OCI-LY7 (cell line): ENCODE measurements at regions of chr2 and their contacts with region 1.

Region 1: GRCh38 chr2:201231781-201232466 is 28.4 kb upstream of the CASP8 start:
- DNase-seq: peak; percentile 96
- H3K4me3 ChIP-seq: peak overlapping the region; percentile 27
- H3K27ac ChIP-seq: peak overlapping the region; percentile 19
- H3K4me1 ChIP-seq: peaks cover 39% of the 10 kb centered on the region
- CTCF ChIP-seq: peak; percentile 97

Region 2: GRCh38 chr2:200713003-200713703 is 518.8 kb before region 1 on chr2:
- CTCF ChIA-PET with region 1: no interaction called
- POLR2A ChIA-PET with region 1: interaction called, 3 read pairs
- intact Hi-C with region 1: loop called (anchors 1 kb)
- DNase-seq: peak; percentile 98
- H3K4me3 ChIP-seq: peak overlapping the region; percentile 50
- H3K27ac ChIP-seq: peak overlapping the region; percentile 43
- H3K4me1 ChIP-seq: peaks cover 15% of the 10 kb centered on the region
- CTCF ChIP-seq: peak; percentile 97

Region 3: GRCh38 chr2:201071479-201072200 is 160.3 kb before region 1 on chr2 and contains the starts of genes HYCC2 and NDUFB3:
- CTCF ChIA-PET with region 1: interaction called, 5 read pairs
- POLR2A ChIA-PET with region 1: interaction called, 7 read pairs
- intact Hi-C with region 1: loop called (anchors 2 kb)
- DNase-seq: peak; percentile 96
- H3K4me3 ChIP-seq: peak within 1 kb of the TSS; percentile 74
- H3K27ac ChIP-seq: peak within 1 kb of the TSS; percentile 58
- H3K4me1 ChIP-seq: peaks cover 39% of the 10 kb centered on the region
- CTCF ChIP-seq: peak; percentile 53; the same call in 1 of the 2 replicates
- total RNA-seq, gene HYCC2: 8.6 and 8.8 TPM in 2 replicates
- total RNA-seq, gene NDUFB3: 90.5 and 134 TPM in 2 replicates

Region 4: GRCh38 chr2:201182650-201183364 is 49.1 kb before region 1 on chr2 and contains the start of gene CASP10:
- CTCF ChIA-PET with region 1: interaction called, 8 read pairs
- POLR2A ChIA-PET with region 1: interaction called, 7 read pairs
- intact Hi-C with region 1: loop called (anchors 1 kb)
- DNase-seq: peak; percentile 42
- H3K4me3 ChIP-seq: peak within 1 kb of the TSS; percentile 40
- H3K27ac ChIP-seq: no peak within 1 kb of the TSS
- H3K4me1 ChIP-seq: peaks cover 9% of the 10 kb centered on the region
- CTCF ChIP-seq: peak; percentile 72
- total RNA-seq, gene CASP10: 0.46 and 1.2 TPM in 2 replicates

Region 5: GRCh38 chr2:201203916-201204654 is 27.8 kb before region 1 on chr2:
- CTCF ChIA-PET with region 1: no interaction called
- POLR2A ChIA-PET with region 1: no interaction called
- intact Hi-C with region 1: no loop called
- DNase-seq: no peak
- H3K4me3 ChIP-seq: no peak overlapping the region
- H3K27ac ChIP-seq: no peak overlapping the region
- H3K4me1 ChIP-seq: peaks cover 20% of the 10 kb centered on the region
- CTCF ChIP-seq: no peak

Region 6: DNA sequence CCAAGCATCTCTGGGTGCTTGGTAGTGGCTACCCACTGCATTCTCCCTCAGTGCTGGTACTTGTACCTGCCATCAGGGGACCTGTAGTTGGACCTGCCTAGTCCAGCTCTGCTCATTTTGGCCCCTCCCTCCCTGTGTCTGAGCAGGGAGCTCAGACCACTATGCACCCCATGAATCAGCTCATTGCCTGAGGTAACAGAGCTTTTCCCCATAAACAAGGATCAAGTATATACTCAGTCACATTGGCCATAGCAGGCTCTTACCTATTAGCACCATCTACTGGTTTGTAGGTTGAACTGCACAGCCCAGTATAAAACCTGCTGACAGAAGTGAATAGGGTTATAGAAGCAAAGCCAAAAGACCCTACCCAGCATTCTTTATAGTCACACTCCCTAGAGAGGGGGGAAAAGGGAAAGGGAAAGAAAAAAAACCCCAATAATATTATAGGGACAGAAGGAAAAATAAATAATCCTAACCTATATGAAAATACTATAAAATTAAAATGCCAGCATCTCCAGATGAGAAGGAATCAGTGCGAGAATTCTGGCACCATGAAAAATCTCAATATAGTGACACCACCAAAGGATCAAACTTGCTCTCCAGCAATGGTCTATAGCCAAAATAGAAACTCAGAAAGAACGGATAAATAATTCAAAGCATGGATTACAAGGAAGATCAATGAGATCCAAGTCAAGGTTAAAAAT is 132.1 kb after region 1 on chr2:
- CTCF ChIA-PET with region 1: interaction called, 3 read pairs
- POLR2A ChIA-PET with region 1: interaction called, 5 read pairs
- intact Hi-C with region 1: loop called (anchors 1 kb)
- DNase-seq: peak; percentile 70
- H3K4me3 ChIP-seq: no peak overlapping the region
- H3K27ac ChIP-seq: no peak overlapping the region
- H3K4me1 ChIP-seq: no peaks in the 10 kb centered on the region
- CTCF ChIP-seq: peak; percentile 98

Region 7: DNA sequence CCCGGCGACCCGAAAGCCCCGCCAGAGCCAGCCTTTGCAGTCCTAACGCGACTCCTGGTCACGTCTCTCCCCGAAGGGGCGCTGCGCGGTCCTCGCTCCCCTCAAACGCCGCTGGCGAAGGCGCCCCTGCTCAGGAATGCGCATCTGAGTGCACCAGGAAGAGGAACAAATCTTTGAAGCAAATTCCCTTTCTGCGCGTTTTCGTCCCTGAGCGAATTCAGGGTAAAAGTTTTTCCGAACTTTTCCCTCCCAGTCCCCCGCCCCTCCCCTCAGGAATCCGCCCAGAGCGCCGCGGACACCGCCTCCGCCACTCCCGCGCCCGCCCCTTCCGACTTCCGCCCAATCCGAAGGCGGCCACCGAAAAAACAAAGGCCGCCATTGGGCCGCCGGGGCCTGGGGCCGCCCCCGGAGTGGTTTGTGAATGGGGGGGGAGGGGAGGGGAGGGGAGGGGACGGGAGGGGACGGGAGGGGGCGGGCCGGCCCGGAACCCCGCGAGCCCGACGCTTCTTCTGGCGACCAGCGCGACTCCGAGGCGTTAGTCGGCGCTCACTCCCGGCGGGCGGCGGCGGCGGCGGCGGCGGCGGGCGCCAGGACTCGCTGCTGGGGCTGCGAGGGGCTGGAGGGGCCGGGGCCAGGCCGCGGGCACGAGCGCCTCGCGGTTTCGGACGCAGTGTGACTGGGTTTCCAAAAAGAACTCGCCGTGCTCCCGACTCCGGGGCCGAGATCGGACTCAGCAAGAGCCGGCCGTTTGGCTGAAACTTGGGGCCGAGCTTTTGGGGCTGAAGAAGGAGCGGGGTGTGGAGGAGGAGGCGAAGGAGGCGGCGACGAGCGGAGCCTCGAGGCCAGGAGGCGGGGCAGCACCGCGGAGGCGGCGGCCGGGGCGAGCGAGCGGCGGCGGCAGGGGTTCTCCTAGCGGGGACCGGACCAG is 801.7 kb after region 1 on chr2 and contains the start of gene FZD7:
- CTCF ChIA-PET with region 1: no interaction called
- POLR2A ChIA-PET with region 1: no interaction called
- intact Hi-C with region 1: no loop called
- DNase-seq: peak; percentile 91
- H3K4me3 ChIP-seq: peak within 1 kb of the TSS; percentile 72
- H3K27ac ChIP-seq: peak within 1 kb of the TSS; percentile 10
- H3K4me1 ChIP-seq: peaks cover 17% of the 10 kb centered on the region
- CTCF ChIP-seq: peak; percentile 41
- total RNA-seq, gene FZD7: 1.5 and 1.7 TPM in 2 replicates

Region 8: DNA sequence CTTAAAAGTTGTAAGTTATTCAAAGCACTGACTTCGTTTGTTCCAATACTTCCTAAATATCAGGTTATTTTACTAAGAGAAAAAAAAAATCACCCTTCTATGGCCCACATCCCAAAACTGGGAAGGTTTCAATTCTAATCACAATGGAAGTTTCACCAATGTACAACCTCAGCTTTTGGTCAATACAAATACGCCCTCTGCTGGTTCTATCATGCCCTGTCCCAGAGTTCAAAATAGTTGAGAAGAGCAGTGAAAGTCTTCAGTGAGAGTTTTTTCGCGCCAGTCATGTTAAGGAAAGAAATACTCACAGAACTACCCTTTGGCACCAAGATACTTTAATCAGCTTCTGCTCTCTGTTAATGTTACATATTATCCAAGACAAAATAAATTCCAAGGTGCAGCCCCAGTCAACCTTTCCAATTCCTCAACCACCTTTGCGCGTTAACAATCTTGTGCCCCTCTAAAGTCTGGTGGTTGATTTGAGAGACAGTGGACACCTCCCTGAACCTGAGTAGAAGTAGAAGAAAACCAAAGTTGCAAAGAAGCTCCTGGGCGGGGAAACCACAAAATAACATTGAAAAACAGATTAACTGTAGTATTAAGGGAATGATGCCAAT is 946.5 kb after region 1 on chr2:
- CTCF ChIA-PET with region 1: no interaction called
- POLR2A ChIA-PET with region 1: no interaction called
- intact Hi-C with region 1: loop called (anchors 5 kb)
- DNase-seq: peak; percentile 67
- H3K4me3 ChIP-seq: no peak overlapping the region
- H3K27ac ChIP-seq: no peak overlapping the region
- H3K4me1 ChIP-seq: no peaks in the 10 kb centered on the region
- CTCF ChIP-seq: peak; percentile 97